ENCODE measurements at regions of chr6 and their contacts with region 1.

Region 1: DNA sequence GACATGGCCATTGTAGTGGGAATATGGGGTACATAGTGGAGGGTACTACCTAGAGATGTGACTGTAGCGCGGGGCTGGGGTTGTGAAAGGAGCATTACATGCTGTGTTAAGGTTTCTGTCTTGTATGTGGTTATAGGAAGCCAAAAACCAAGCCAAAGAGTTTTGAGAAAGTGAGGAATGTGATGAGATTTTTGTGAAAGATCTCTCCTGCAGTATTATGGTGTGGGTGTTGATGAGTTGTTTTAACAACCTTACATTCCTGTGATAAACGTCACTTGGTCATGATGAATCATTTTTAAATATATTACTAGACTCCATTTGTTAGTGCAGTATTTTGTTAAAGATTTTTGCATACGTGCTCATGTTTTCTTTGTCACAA is 48.9 kb downstream of the ZFAND3 start:
- DNase-seq: peak; percentile 32
- H3K4me3 Mint-ChIP-seq: no peak overlapping the region
- H3K27ac Mint-ChIP-seq: no peak overlapping the region
- H3K4me1 Mint-ChIP-seq: peaks cover 66% of the 10 kb centered on the region
- H3K27me3 Mint-ChIP-seq: no peaks in the 10 kb centered on the region

Region 2: DNA sequence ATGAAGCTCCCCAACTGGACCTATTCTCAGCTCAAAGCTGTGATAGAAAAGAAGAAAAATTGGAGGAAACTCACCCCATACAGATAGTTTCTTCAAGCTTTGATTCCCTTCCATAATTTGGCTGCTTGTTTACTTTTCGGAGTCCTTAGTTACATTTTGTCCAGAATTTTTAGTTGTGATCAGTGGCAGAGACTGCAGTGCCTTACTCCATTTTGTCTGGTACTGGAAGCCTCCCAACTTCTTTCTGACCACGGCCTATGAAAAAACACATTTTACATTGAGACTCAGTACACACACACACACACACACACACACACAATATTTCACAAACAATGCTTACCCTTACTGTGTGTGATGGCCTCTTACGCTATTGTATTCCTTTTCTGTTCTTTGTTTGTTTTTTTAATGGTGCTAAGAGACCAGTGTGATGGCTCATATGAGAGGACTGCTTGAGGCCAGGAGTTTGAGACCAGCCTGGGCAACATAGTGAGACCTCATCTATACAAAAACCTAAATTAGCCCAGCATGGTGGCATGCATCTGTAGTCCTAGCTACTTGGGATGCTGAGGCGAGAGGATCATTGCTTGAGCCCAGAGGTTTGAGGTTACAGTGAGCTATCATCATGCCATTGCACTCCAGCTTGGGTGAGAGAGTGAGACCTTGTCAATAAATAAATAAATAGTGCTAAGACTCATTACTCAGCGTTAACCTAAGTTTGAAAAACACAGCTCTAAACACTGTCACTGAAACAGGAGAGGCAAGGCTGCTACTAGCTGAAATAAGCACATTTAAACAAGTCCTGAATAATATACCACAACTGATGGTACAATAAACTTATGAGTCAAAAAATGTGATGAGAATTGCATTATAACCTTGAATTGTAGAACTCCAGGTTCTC is 528.4 kb before region 1 on chr6:
- CTCF ChIA-PET with region 1: no interaction called
- POLR2A ChIA-PET with region 1: no interaction called
- intact Hi-C with region 1: no loop called
- DNase-seq: no peak
- H3K4me3 Mint-ChIP-seq: no peak overlapping the region
- H3K27ac Mint-ChIP-seq: no peak overlapping the region
- H3K4me1 Mint-ChIP-seq: no peaks in the 10 kb centered on the region
- H3K27me3 Mint-ChIP-seq: peaks cover 9% of the 10 kb centered on the region

Region 3: GRCh38 chr6:37783856-37784584 is 84.4 kb before region 1 on chr6:
- CTCF ChIA-PET with region 1: no interaction called
- POLR2A ChIA-PET with region 1: no interaction called
- intact Hi-C with region 1: no loop called
- DNase-seq: peak; percentile 23
- H3K4me3 Mint-ChIP-seq: peak overlapping the region; percentile 62
- H3K27ac Mint-ChIP-seq: no peak overlapping the region
- H3K4me1 Mint-ChIP-seq: peaks cover 16% of the 10 kb centered on the region
- H3K27me3 Mint-ChIP-seq: peaks cover 32% of the 10 kb centered on the region

Region 4: DNA sequence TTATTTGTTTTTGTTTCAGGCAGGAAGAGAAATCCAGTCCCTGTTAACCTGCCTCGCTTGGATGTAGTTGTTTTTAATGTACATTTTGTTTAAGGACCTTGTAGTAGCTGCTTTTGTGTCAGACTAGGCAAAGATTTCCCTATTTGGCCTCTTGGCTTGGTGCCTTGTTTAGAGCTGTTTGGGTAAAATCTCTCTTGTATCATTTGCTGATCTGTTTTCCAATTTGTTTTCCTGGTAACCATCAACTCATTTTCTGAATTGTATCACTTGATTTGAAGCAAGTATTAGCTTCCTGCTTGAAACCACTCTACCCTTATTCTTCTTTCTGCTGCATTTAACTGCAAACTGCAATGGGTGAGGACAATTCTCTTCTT is 111.8 kb after region 1 on chr6:
- CTCF ChIA-PET with region 1: no interaction called
- POLR2A ChIA-PET with region 1: no interaction called
- intact Hi-C with region 1: loop called (anchors 5 kb)
- DNase-seq: no peak
- H3K4me3 Mint-ChIP-seq: no peak overlapping the region
- H3K27ac Mint-ChIP-seq: no peak overlapping the region
- H3K4me1 Mint-ChIP-seq: peaks cover 55% of the 10 kb centered on the region
- H3K27me3 Mint-ChIP-seq: no peaks in the 10 kb centered on the region